ENCODE measurements at regions of chr2 and their contacts with region 1.

Region 1: DNA sequence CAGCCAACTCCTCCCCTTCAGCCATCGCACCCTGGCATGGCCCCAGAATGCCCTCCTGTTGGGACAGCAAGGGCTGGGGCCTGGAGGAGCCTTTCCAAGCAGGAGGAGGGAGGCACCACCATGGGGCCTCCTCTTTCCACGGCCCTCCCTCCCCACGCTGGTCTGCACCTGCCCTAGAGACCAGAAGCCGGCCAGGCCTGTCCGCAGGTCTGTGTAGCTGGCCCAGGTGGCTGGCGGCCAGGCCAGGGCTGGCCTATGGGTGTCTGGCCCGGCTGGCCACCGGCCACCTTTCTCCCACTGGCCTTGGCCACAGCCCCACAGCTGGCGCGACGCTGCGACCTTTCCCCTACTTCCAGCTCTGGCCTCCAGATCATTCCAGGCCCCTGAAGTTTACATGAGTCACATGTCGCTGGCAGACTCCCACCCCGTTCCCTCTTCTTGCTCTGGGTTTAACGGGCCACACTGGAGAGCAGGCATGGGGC is 33.5 kb upstream of the KLF11 start:
- DNase-seq: peak; percentile 83 to 90
- ATAC-seq: peak; percentile 71 to 90 (median 86)
- H3K4me3 ChIP-seq: no peak overlapping the region
- H3K27ac ChIP-seq: peak overlapping the region; percentile 39 to 80 (median 66)
- H3K4me1 ChIP-seq: peaks cover 21 to 45% (median 35%) of the 10 kb centered on the region in 9 donors
- H3K27me3 ChIP-seq: peaks cover 0 to 16% (median 0%) of the 10 kb centered on the region in 7 donors
- CTCF ChIP-seq: no peak

Region 2: GRCh38 chr2:10036095-10036884 is 26.4 kb after region 1 on chr2:
- intact Hi-C with region 1: loop called in 1 of 10 experiments (anchors 2 kb)
- DNase-seq: peak; percentile 68 to 69
- ATAC-seq: peak; percentile 70 to 87 (median 78)
- H3K4me3 ChIP-seq: no peak overlapping the region
- H3K27ac ChIP-seq: peak overlapping the region; percentile 0 to 96 (median 72)
- H3K4me1 ChIP-seq: peaks cover 13 to 68% (median 59%) of the 10 kb centered on the region in 9 donors
- H3K27me3 ChIP-seq: no peaks in the 10 kb centered on the region
- CTCF ChIP-seq: peak in 8 of 9 donors; percentile 32 to 74 (median 60)

Measured in heart right ventricle (tissue), 16 donors.